SK-N-SH (cell line): ENCODE measurements at regions of chr2 and their contacts with region 1.

Region 1: DNA sequence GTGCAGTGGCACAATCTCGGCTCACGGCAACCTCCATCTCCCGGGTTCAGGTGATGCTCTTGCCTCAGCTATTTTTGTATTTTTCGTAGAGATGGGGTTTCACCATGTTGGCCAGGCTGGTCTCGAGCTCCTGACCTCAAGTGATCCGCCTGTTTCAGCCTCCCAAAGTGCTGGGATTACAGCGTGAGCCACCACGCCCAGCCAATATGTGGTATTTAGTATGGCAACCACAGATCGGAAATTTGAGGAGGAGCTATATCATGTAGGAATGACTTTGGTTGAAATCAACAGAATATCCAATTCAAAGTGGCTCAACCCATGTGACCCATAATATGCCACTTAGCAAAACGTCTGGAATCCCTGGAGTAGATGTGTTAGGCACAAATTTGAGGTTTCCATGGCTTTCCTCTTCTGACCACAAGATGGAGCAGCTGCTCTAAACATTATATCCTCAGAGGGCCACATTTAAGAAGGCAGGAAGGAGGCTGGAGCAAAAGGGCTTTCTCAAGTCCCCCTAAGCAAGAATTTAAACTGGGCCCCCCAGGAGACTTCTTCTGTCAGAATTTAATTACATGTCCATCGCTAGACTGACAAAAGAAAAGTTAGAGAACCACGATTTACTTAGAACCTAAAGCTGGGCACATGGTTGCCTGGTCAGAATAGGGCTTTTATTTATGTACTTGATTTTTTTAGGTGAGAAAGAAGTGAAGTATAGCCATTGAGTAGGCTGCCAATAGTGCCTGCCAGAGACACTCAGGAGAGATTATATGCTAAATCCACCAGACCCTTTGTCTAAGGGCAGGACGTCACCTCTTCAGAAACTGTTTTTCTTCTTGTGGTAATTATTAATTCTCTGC is 49.6 kb upstream of the ITSN2 start:
- DNase-seq: peak; percentile 83
- H3K4me3 ChIP-seq: no peak overlapping the region
- H3K27ac ChIP-seq: no peak overlapping the region
- H3K4me1 ChIP-seq: no peaks in the 10 kb centered on the region
- H3K27me3 ChIP-seq: no peaks in the 10 kb centered on the region
- CTCF ChIP-seq: peak; percentile 97
- EP300 ChIP-seq: no peak
- RAD21 ChIP-seq: peak; percentile 99

Region 2: DNA sequence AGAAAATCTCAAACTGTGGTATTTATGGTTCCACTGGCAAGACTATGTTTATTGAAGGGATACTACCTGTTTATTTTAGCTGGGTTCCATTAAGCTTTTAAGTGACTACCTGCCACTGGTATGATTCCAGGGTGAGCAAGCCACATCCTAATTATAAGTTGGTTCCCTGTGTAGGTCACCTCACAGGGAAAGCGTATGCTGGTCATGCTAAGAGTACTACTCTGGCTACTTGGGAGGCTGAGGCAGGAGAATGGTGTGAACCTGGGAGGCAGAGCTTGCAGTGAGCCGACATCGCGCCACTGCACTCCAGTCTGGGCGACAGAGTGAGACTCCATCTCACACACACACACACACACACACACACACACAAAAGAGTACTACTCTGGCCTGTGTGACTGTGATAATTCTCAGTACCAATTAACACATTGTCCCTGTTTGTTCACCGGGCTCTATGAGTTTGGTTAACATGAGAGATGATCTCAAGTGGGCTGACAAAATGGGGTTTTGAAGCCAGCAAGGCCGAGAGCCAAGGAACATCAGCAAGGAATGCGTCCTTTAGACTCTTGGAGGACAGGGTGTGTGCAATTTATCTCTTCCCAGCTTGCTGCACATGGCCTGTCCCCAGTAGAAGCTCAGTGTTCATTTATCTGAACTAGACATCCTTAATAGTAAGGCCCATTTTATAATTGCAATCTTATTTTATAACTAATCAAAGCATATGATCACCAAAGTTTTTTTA is 34.4 kb before region 1 on chr2:
- CTCF ChIA-PET with region 1: no interaction called
- POLR2A ChIA-PET with region 1: no interaction called
- DNase-seq: no peak
- H3K4me3 ChIP-seq: no peak overlapping the region
- H3K27ac ChIP-seq: no peak overlapping the region
- H3K4me1 ChIP-seq: no peaks in the 10 kb centered on the region; a peak in 1 of 4 replicates
- H3K27me3 ChIP-seq: no peaks in the 10 kb centered on the region
- CTCF ChIP-seq: no peak
- EP300 ChIP-seq: no peak
- RAD21 ChIP-seq: no peak

Region 3: DNA sequence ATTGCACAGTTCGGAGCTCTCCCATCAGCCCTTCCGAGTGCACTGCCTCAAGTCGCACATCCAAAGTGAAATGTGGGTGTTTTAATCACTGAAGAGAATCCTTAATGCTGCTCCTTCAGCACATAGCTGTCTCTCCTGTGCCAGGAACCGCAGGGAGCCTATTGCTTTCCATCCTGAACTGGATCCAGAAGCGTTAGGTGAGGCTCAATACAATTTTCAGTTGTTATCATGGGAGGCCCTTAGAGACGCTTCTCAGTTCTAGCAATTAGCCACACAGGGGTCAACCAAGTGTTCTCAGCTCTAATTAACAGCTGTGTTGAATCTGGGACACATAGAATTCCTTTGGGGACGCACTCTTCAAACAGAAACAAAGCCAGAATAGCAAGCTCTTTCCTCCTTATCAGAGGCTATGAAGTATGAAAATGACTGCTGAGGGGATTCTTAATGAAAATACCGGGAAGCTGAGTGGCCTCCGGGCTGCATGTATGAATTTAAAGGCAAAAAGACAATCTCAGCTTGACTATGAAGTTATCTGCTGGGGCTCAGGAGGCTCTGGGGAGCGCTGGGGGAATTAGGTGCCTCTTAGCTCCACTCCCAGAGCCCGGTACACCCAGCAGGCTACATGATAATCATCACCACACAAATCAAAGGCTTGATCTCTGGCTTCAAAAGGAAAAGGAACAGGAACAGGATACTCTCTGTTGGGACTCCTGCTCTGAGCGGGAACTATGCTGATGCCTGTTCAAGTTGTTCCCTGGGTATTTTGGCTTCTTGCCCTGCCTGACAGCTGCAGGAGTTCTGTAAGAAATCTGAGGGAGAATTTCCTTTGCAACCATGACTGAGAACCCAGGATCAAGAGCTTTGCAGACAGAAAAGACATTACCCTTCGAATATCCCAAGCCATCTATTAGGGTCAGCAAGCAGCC is 25.7 kb after region 1 on chr2:
- CTCF ChIA-PET with region 1: interaction called, 23 read pairs
- POLR2A ChIA-PET with region 1: no interaction called
- DNase-seq: peak; percentile 61
- H3K4me3 ChIP-seq: no peak overlapping the region
- H3K27ac ChIP-seq: peak overlapping the region in 1 of 2 experiments; percentile 60; a peak in 2 of 4 replicates
- H3K4me1 ChIP-seq: peaks cover 6 to 13% of the 10 kb centered on the region in 2 experiments; a peak in 3 of 4 replicates
- H3K27me3 ChIP-seq: no peaks in the 10 kb centered on the region
- CTCF ChIP-seq: no peak
- EP300 ChIP-seq: no peak
- RAD21 ChIP-seq: no peak; the same call in 1 of the 2 replicates

Region 4: DNA sequence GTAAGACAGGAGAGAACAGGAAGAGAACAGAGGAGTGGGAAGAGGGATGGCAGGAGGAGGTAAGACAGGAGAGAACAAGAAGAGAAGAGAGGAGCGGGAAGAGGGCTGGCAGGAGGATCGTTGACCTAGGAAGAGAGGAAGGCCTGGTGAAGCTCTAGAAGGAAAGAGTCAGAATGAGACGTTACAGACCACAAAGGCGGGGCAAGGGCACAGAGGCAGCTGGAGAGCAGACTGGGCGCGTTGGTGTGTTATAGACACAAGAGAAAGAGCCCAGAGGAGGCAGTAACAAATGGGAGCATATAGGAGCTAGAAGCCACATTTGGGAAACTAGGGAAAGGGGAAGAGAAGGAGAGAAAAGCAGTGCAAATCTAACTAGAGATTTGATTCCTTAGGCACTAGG is 356.7 kb after region 1 on chr2:
- CTCF ChIA-PET with region 1: interaction called, 19 read pairs
- POLR2A ChIA-PET with region 1: no interaction called
- DNase-seq: no peak
- H3K4me3 ChIP-seq: no peak overlapping the region
- H3K27ac ChIP-seq: no peak overlapping the region
- H3K4me1 ChIP-seq: no peaks in the 10 kb centered on the region; a peak in 1 of 4 replicates
- H3K27me3 ChIP-seq: no peaks in the 10 kb centered on the region
- CTCF ChIP-seq: no peak
- EP300 ChIP-seq: no peak
- RAD21 ChIP-seq: no peak

Region 5: GRCh38 chr2:24816884-24817283 is 407.0 kb after region 1 on chr2:
- CTCF ChIA-PET with region 1: interaction called, 269 read pairs
- POLR2A ChIA-PET with region 1: no interaction called
- DNase-seq: peak; percentile 21
- H3K4me3 ChIP-seq: no peak overlapping the region
- H3K27ac ChIP-seq: peak overlapping the region in 1 of 2 experiments; percentile 71; a peak in 3 of 4 replicates
- H3K4me1 ChIP-seq: peaks cover 4 to 15% of the 10 kb centered on the region in 2 experiments; a peak in 2 of 4 replicates
- H3K27me3 ChIP-seq: no peaks in the 10 kb centered on the region
- CTCF ChIP-seq: no peak
- EP300 ChIP-seq: no peak; a peak in 1 of 4 replicates
- RAD21 ChIP-seq: no peak

Region 6: GRCh38 chr2:24909555-24910177 is 499.7 kb after region 1 on chr2:
- CTCF ChIA-PET with region 1: no interaction called
- POLR2A ChIA-PET with region 1: no interaction called
- DNase-seq: no peak
- H3K4me3 ChIP-seq: no peak overlapping the region
- H3K27ac ChIP-seq: no peak overlapping the region; a peak in 1 of 4 replicates
- H3K4me1 ChIP-seq: peaks cover 0 to 3% of the 10 kb centered on the region in 2 experiments; a peak in 1 of 4 replicates
- H3K27me3 ChIP-seq: no peaks in the 10 kb centered on the region
- CTCF ChIP-seq: no peak
- EP300 ChIP-seq: no peak; a peak in 1 of 4 replicates
- RAD21 ChIP-seq: no peak

Region 7: GRCh38 chr2:25197336-25198208 is 787.6 kb after region 1 on chr2:
- CTCF ChIA-PET with region 1: interaction called, 18 read pairs
- POLR2A ChIA-PET with region 1: no interaction called
- DNase-seq: no peak
- H3K4me3 ChIP-seq: no peak overlapping the region
- H3K27ac ChIP-seq: no peak overlapping the region
- H3K4me1 ChIP-seq: peaks cover 0 to 8% of the 10 kb centered on the region in 2 experiments; a peak in 1 of 4 replicates
- H3K27me3 ChIP-seq: no peaks in the 10 kb centered on the region
- CTCF ChIP-seq: no peak
- EP300 ChIP-seq: no peak
- RAD21 ChIP-seq: no peak